ENCODE measurements at regions of chr12 and their contacts with region 1.

Region 1: DNA sequence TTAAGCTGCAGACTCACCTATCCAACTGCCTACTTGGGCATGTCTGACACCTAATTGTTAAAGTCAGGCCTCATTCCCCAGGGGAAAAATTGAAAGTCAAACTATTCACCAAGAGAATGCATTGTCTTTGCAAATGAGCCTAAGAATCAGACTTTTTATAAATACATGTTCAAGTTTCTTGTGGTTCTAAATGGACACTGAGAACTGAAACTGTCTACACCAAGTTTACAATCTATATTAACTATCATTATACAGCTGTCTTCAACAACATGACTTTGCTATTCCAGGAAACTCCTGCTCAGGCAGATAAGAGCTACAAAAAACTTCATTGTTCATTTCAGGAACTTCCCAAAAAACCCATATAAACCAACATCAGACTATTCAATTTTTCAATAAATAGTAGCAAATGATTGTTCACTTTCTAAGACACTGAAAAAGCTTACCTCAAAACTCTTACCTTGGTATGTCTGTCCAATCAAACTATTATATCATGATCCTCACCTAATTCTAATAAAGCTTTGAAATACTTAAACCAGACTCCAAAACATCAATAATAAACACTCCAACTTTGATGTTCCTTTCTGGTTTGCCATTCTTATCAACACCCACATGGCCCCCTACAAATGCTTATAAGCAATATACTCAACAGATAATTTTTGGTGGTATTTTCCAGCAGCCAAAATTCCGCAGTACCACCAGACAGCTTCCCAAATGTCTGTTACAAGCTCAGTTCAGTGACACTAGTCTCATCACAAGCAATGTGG is 24.2 kb downstream of the CDK17 start:
- DNase-seq: no peak
- ATAC-seq: no peak
- H3K4me3 ChIP-seq: no peak overlapping the region
- H3K4me3 Mint-ChIP-seq: peak overlapping the region; percentile 53 to 91 (median 64)
- H3K27ac ChIP-seq: peak overlapping the region; percentile 72
- H3K27ac Mint-ChIP-seq: peak overlapping the region in 8 of 9 donors; percentile 74 to 98 (median 96)
- H3K4me1 ChIP-seq: peaks cover 46 to 70% of the 10 kb centered on the region in 2 donors
- H3K4me1 Mint-ChIP-seq: peaks cover 59 to 94% (median 74%) of the 10 kb centered on the region in 7 donors
- H3K27me3 ChIP-seq: no peaks in the 10 kb centered on the region
- H3K27me3 Mint-ChIP-seq: no peaks in the 10 kb centered on the region

Region 2: GRCh38 chr12:95998611-95999286 is 377.3 kb before region 1 on chr12:
- CTCF ChIA-PET with region 1: no interaction called
- POLR2A ChIA-PET with region 1: no interaction called
- intact Hi-C with region 1: no loop called
- DNase-seq: peak in 7 of 9 donors; percentile 44 to 69 (median 58)
- ATAC-seq: peak; percentile 96
- H3K4me3 ChIP-seq: no peak overlapping the region
- H3K4me3 Mint-ChIP-seq: peak overlapping the region in 1 of 10 donors; percentile 11
- H3K27ac ChIP-seq: no peak overlapping the region
- H3K27ac Mint-ChIP-seq: peak overlapping the region in 5 of 9 donors; percentile 2 to 68 (median 16)
- H3K4me1 ChIP-seq: no peaks in the 10 kb centered on the region
- H3K4me1 Mint-ChIP-seq: peaks cover 0 to 13% (median 3%) of the 10 kb centered on the region in 7 donors
- H3K27me3 ChIP-seq: no peaks in the 10 kb centered on the region
- H3K27me3 Mint-ChIP-seq: no peaks in the 10 kb centered on the region

Region 3: GRCh38 chr12:96314723-96315122 is 61.3 kb before region 1 on chr12:
- CTCF ChIA-PET with region 1: no interaction called
- POLR2A ChIA-PET with region 1: interaction called, 10 read pairs
- intact Hi-C with region 1: no loop called
- DNase-seq: no peak
- ATAC-seq: no peak
- H3K4me3 ChIP-seq: no peak overlapping the region
- H3K4me3 Mint-ChIP-seq: peak overlapping the region in 7 of 10 donors; percentile 20 to 58 (median 38)
- H3K27ac ChIP-seq: no peak overlapping the region
- H3K27ac Mint-ChIP-seq: peak overlapping the region in 7 of 9 donors; percentile 59 to 97 (median 81)
- H3K4me1 ChIP-seq: peaks cover 0 to 4% of the 10 kb centered on the region in 2 donors
- H3K4me1 Mint-ChIP-seq: peaks cover 5 to 37% (median 20%) of the 10 kb centered on the region in 7 donors
- H3K27me3 ChIP-seq: no peaks in the 10 kb centered on the region
- H3K27me3 Mint-ChIP-seq: no peaks in the 10 kb centered on the region

Region 4: DNA sequence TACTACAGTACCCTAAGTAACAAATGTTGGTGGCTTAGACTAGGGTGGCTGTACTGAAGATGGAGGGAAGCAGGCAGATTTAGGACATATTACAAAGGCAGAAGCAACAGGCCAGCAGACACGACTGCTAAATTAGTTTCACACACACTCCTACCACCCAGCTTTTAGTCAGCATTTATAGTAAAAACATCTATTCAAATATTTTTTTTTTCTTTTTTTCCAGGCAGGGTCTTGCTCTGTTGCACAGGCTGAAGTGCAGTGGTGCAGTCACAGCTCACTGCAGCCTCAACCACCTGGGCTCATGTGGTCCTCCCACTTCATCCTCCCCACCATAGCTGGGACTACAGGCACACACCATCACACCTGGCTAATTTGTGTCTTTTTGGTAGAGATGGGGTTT is 48.7 kb before region 1 on chr12:
- CTCF ChIA-PET with region 1: interaction called, 3 read pairs
- POLR2A ChIA-PET with region 1: interaction called, 8 read pairs
- intact Hi-C with region 1: loop called in 1 of 2 experiments (anchors 1 kb)
- DNase-seq: no peak
- ATAC-seq: peak; percentile 16
- H3K4me3 ChIP-seq: no peak overlapping the region
- H3K4me3 Mint-ChIP-seq: peak overlapping the region in 9 of 10 donors; percentile 4 to 76 (median 57)
- H3K27ac ChIP-seq: peak overlapping the region; percentile 52
- H3K27ac Mint-ChIP-seq: peak overlapping the region in 8 of 9 donors; percentile 69 to 92 (median 82)
- H3K4me1 ChIP-seq: peaks cover 9 to 43% of the 10 kb centered on the region in 2 donors
- H3K4me1 Mint-ChIP-seq: peaks cover 43 to 80% (median 61%) of the 10 kb centered on the region in 7 donors
- H3K27me3 ChIP-seq: no peaks in the 10 kb centered on the region
- H3K27me3 Mint-ChIP-seq: no peaks in the 10 kb centered on the region

Region 5: GRCh38 chr12:96335270-96335669 is 40.8 kb before region 1 on chr12:
- CTCF ChIA-PET with region 1: interaction called, 3 read pairs
- POLR2A ChIA-PET with region 1: interaction called, 4 read pairs
- intact Hi-C with region 1: loop called in 1 of 2 experiments (anchors 5 kb)
- DNase-seq: peak in 6 of 9 donors; percentile 23 to 51 (median 34)
- ATAC-seq: peak; percentile 72
- H3K4me3 ChIP-seq: no peak overlapping the region
- H3K4me3 Mint-ChIP-seq: peak overlapping the region in 9 of 10 donors; percentile 27 to 74 (median 54)
- H3K27ac ChIP-seq: peak overlapping the region; percentile 34
- H3K27ac Mint-ChIP-seq: peak overlapping the region; percentile 30 to 87 (median 78)
- H3K4me1 ChIP-seq: peaks cover 7% of the 10 kb centered on the region in 2 donors
- H3K4me1 Mint-ChIP-seq: peaks cover 21 to 69% (median 60%) of the 10 kb centered on the region in 7 donors
- H3K27me3 ChIP-seq: no peaks in the 10 kb centered on the region
- H3K27me3 Mint-ChIP-seq: no peaks in the 10 kb centered on the region

Region 6: DNA sequence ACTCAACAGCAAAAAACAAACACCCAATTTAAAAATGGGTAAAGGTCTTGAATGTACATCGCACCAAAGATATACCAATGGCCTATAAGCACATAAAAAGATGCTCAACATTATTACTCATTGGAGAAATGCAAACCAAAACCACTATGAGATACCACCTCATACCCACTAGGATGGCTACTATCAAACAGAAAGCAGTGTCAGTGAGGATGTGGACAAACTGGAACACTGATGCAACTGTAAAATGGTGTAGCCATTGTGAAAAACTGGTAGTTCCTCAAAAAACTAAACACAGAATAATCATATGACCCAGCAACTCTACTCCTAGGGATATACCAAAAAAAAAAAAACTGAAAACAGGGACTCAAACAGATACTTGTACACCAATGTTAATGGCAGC is 25.0 kb before region 1 on chr12:
- CTCF ChIA-PET with region 1: no interaction called
- POLR2A ChIA-PET with region 1: interaction called, 3 read pairs
- intact Hi-C with region 1: loop called in 1 of 2 experiments (anchors 2 kb)
- DNase-seq: no peak
- ATAC-seq: peak; percentile 76
- H3K4me3 ChIP-seq: no peak overlapping the region
- H3K4me3 Mint-ChIP-seq: peak overlapping the region in 5 of 10 donors; percentile 15 to 55 (median 37)
- H3K27ac ChIP-seq: no peak overlapping the region
- H3K27ac Mint-ChIP-seq: peak overlapping the region in 5 of 9 donors; percentile 9 to 83 (median 39)
- H3K4me1 ChIP-seq: peaks cover 26 to 49% of the 10 kb centered on the region in 2 donors
- H3K4me1 Mint-ChIP-seq: peaks cover 61 to 95% (median 86%) of the 10 kb centered on the region in 7 donors
- H3K27me3 ChIP-seq: no peaks in the 10 kb centered on the region
- H3K27me3 Mint-ChIP-seq: no peaks in the 10 kb centered on the region

Region 7: GRCh38 chr12:96361074-96361473 is 14.9 kb before region 1 on chr12:
- CTCF ChIA-PET with region 1: interaction called, 4 read pairs
- POLR2A ChIA-PET with region 1: interaction called, 4 read pairs
- intact Hi-C with region 1: loop called in 1 of 2 experiments (anchors 1 kb)
- DNase-seq: no peak
- ATAC-seq: no peak
- H3K4me3 ChIP-seq: no peak overlapping the region
- H3K4me3 Mint-ChIP-seq: peak overlapping the region in 4 of 10 donors; percentile 1 to 48 (median 28)
- H3K27ac ChIP-seq: no peak overlapping the region
- H3K27ac Mint-ChIP-seq: peak overlapping the region in 4 of 9 donors; percentile 8 to 59 (median 23)
- H3K4me1 ChIP-seq: peaks cover 21 to 57% of the 10 kb centered on the region in 2 donors
- H3K4me1 Mint-ChIP-seq: peaks cover 30 to 90% (median 84%) of the 10 kb centered on the region in 7 donors
- H3K27me3 ChIP-seq: no peaks in the 10 kb centered on the region
- H3K27me3 Mint-ChIP-seq: no peaks in the 10 kb centered on the region

Measured in naive thymus-derived CD4-positive, alpha-beta T cell (primary cell).